ENCODE measurements at regions of chr5 and their contacts with region 1.

Region 1: DNA sequence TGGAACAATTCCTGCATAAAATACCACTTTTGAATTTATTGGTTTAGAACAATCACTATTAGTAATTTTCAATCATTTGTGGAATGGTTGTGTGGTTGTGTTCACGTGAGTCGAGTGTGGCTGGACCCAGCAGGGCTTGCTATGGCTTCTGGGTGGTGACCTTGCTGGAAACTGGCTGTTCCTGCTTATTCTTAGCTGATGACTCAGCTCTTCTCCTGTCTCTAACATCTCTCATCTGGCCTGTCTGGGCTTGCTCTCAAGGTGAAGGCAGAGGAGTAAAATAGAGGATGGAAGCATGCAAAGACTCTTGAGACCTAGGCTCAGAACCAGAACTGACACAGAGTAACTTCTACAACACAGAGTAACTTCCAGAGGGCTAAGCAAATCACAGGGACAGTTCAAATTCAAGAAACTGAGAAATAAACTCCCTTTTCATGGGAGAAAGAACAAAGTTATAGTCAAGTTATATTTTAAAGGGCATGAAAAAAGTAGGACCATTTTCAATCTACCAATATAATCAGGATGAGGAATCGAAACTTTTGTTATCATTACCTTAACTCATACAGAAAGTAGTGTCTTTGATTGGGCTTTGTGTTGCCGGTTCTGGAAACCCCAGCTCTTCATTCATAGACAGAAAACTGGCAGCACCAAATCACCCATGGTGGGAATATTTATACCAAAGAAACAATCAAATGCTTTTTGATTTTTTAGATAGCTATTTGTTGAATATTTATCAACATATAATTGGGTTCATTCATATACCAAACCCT is 665.1 kb downstream of the CDH18 start:
- DNase-seq: peak; percentile 91
- H3K4me3 ChIP-seq: peak overlapping the region in 1 of 3 experiments; percentile 26
- H3K27ac ChIP-seq: peak overlapping the region; percentile 41
- H3K4me1 ChIP-seq: peaks cover 9% of the 10 kb centered on the region
- H3K27me3 ChIP-seq: no peaks in the 10 kb centered on the region
- CTCF ChIP-seq: no peak

Region 2: GRCh38 chr5:19479562-19479961 is 156.7 kb after region 1 on chr5:
- CTCF ChIA-PET with region 1: no interaction called
- dilution Hi-C with region 1: no loop called
- in situ Hi-C with region 1: no loop called
- intact Hi-C with region 1: loop called (anchors 10 kb)
- DNase-seq: no peak
- H3K4me3 ChIP-seq: no peak overlapping the region
- H3K27ac ChIP-seq: no peak overlapping the region
- H3K4me1 ChIP-seq: no peaks in the 10 kb centered on the region
- H3K27me3 ChIP-seq: no peaks in the 10 kb centered on the region
- CTCF ChIP-seq: no peak

Region 3: DNA sequence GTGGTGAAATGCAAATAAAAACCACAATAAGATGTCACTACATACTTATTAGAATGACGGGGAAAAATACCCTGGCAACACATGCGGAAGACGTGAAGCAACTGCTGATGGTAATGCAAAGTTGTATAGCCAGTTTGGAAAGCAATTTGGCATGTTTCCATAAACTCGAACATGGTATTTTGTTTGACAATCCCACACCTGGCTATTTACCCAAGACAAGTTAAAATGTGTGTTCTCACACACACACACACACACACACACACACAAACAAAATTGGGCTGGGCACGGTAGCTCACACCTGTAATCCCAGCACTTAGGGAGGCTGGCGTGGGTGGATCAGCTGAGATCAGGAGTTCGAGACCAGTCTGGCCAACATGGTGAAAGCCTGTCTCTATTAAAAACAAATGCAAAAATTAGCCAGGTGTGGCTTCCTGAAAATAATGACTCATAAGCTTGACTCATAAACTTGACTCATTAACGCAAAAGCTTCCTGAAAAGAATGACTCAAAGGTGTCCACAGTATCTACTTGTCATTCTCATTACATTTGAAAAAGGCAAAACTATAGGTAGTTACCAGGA is 208.6 kb after region 1 on chr5:
- CTCF ChIA-PET with region 1: no interaction called
- dilution Hi-C with region 1: no loop called
- in situ Hi-C with region 1: no loop called
- intact Hi-C with region 1: loop called (anchors 5 kb)
- DNase-seq: peak; percentile 95
- H3K4me3 ChIP-seq: peak overlapping the region in 2 of 3 experiments; percentile 16 to 27
- H3K27ac ChIP-seq: peak overlapping the region; percentile 99
- H3K4me1 ChIP-seq: peaks cover 21% of the 10 kb centered on the region
- H3K27me3 ChIP-seq: no peaks in the 10 kb centered on the region
- CTCF ChIP-seq: no peak

Measured in mammary epithelial cell (primary cell).